CD8-positive, alpha-beta T cell (primary cell): ENCODE measurements at regions of chr9 and their contacts with region 1.

Region 1: DNA sequence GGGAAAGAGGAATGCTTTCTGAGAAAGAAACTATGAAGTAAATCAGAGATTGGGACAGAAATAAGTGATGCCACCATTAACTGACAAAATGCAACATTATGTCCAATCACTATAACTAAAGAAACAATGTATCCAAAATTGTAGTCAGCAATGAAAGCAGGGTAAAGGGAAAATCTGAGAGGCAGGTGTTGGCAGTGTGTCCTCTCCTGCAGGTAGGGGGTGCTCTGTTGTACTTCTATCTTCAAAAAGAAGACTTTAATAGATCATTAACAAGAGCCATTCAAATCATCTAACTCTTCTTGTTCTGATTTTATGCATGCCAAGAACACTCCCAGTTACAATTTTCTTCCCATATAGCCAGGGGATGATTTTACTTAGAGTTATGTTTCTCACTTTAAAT is 1275.7 kb downstream of the PTPRD start:
- DNase-seq: no peak
- ATAC-seq: no peak
- H3K4me3 ChIP-seq: no peak overlapping the region
- H3K4me3 Mint-ChIP-seq: no peak overlapping the region
- H3K27ac ChIP-seq: no peak overlapping the region
- H3K27ac Mint-ChIP-seq: no peak overlapping the region
- H3K4me1 ChIP-seq: no peaks in the 10 kb centered on the region
- H3K4me1 Mint-ChIP-seq: no peaks in the 10 kb centered on the region
- H3K27me3 ChIP-seq: no peaks in the 10 kb centered on the region
- H3K27me3 Mint-ChIP-seq: no peaks in the 10 kb centered on the region
- CTCF ChIP-seq: no peak

Region 2: DNA sequence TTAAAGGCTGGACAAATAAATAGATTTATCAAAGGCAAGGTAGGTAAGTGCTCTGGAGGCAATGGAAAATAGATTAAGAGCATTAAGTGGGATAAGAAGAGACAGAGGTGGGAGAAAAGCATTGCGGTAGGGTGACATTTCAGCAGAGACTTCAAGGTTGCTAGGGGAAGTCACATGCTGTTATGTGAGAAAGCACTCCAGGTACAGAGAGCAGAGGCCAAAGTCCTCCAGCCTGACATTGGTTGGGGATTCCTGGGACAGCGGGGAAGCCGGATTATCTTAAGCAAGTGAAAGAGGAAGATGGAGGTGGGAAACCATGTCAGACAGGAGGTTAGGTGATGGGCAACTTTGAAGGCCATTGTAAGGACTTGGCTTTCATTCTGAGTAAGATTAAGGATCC is 52.8 kb after region 1 on chr9:
- CTCF ChIA-PET with region 1: no interaction called
- POLR2A ChIA-PET with region 1: no interaction called
- intact Hi-C with region 1: loop called in 1 of 2 experiments (anchors 10 kb)
- DNase-seq: no peak
- ATAC-seq: no peak
- H3K4me3 ChIP-seq: no peak overlapping the region
- H3K4me3 Mint-ChIP-seq: no peak overlapping the region
- H3K27ac ChIP-seq: no peak overlapping the region
- H3K27ac Mint-ChIP-seq: no peak overlapping the region
- H3K4me1 ChIP-seq: no peaks in the 10 kb centered on the region
- H3K4me1 Mint-ChIP-seq: no peaks in the 10 kb centered on the region
- H3K27me3 ChIP-seq: no peaks in the 10 kb centered on the region
- H3K27me3 Mint-ChIP-seq: no peaks in the 10 kb centered on the region
- CTCF ChIP-seq: no peak